Activated B cell treated with CpG ODN at 0.5 μM for 24 hours (primary cell): ENCODE measurements at regions of chr2 and their contacts with region 1.

Region 1: DNA sequence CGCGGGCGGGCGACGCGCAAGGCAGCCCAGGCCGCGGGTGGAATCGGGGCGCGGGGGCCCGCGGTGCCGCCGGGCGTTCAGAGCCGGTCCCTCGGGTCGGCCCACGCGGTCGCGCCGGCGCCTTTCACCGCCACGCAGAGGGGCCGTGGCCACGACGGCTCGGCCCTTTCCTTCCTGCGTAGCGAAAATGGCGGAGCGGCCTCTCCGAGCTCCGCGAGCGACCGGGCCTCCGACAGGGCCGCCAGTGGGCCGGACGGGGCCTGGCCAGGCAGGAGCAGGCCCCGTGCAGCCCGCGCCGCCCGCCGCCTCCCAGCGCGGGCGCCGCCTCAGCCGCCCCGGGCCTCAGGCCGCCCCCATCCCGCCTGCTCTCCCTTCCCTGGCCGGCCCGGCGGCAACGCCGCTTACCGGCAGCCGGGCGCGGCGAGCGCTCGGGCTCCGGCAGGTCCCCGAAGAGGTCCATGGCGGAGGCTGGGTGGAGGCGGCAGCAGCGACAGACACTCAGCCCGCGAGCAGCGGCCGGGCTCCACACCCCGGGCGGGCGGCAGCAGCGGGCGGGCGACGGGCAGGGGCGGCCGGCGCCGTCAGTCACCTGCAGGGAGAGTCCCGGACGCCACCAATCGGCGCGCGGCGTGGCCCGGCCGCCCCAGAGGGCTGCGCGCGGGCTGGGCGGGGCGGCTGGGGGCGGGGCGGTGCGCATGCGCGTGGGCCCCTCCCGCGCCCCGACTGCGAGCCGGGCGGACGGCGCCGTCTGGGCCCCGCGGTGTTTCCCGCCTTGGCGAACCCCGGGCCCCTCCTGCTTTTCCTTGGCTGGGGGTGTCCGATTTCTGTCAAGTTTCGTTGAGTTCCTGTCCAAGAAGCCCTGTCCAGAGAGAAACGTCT is at the start of gene ILKAP:
- DNase-seq: peak; percentile 90
- ATAC-seq: peak; percentile 97
- H3K4me3 Mint-ChIP-seq: peak within 1 kb of the TSS; percentile 85
- H3K27ac Mint-ChIP-seq: peak within 1 kb of the TSS; percentile 89
- H3K4me1 Mint-ChIP-seq: peaks cover 48% of the 10 kb centered on the region
- H3K27me3 Mint-ChIP-seq: no peaks in the 10 kb centered on the region
- CTCF ChIP-seq: no peak
- total RNA-seq, gene ILKAP: 64.4 and 77.3 TPM in 2 replicates

Region 2: DNA sequence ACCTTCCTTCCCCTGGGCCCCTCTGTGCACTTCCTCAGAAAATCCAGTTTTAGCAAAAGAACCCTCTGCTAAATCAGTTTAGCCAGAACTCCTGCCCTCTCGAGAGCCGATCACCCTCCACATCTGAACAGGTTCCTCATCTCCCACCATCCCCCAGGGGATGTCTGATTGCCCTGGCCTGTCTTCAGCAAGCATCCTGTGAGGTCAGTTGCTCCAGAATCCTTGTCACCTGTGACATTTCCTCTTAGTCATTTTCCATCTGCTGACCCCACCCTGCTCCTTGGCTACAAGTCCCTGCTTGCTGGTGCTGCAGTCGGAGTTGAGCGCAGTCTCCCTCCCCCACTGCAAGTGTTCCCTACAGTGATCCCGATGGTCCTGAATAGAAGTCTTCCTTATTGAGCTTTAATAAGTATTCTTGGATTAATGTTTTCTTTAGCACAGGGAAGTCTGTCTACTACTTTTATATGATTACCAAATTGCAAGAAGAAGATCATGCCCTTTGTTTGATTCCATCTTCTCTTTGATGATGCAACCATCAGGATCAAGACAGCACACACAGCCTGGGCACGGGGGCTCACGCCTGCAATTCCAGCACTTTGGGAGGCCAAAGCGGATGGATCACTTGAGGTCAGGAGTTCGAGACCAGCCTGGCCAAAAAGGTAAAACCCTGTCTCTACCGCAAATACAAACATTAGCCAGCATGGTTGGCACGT is 267.4 kb before region 1 on chr2:
- CTCF ChIA-PET with region 1: no interaction called
- POLR2A ChIA-PET with region 1: interaction called, 10 read pairs
- intact Hi-C with region 1: no loop called
- DNase-seq: no peak
- ATAC-seq: no peak
- H3K4me3 Mint-ChIP-seq: no peak overlapping the region
- H3K27ac Mint-ChIP-seq: no peak overlapping the region
- H3K4me1 Mint-ChIP-seq: peaks cover 6% of the 10 kb centered on the region
- H3K27me3 Mint-ChIP-seq: peaks cover 4% of the 10 kb centered on the region
- CTCF ChIP-seq: no peak

Region 3: DNA sequence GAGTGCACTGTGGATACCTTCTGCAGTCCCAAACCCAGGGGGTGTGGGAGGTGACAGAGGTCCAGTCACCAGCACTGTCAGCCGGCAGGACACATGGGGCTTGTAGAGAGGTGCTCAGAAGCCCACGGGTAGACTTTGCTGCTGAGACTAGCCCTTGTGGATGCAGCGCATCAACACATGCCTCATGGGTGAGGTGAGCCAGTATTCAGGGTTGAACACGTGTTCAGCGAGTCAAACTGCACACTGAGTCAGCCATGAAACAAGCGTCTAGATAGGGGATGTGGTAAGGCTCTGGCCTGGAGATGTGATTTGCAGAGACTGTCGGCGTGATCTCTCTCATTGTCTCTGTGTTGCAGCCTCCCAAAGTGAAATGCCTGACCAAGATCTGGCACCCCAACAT is 178.3 kb before region 1 on chr2:
- CTCF ChIA-PET with region 1: no interaction called
- POLR2A ChIA-PET with region 1: no interaction called
- intact Hi-C with region 1: no loop called
- DNase-seq: no peak
- ATAC-seq: no peak
- H3K4me3 Mint-ChIP-seq: no peak overlapping the region
- H3K27ac Mint-ChIP-seq: no peak overlapping the region
- H3K4me1 Mint-ChIP-seq: no peaks in the 10 kb centered on the region
- H3K27me3 Mint-ChIP-seq: no peaks in the 10 kb centered on the region
- CTCF ChIP-seq: no peak

Region 4: DNA sequence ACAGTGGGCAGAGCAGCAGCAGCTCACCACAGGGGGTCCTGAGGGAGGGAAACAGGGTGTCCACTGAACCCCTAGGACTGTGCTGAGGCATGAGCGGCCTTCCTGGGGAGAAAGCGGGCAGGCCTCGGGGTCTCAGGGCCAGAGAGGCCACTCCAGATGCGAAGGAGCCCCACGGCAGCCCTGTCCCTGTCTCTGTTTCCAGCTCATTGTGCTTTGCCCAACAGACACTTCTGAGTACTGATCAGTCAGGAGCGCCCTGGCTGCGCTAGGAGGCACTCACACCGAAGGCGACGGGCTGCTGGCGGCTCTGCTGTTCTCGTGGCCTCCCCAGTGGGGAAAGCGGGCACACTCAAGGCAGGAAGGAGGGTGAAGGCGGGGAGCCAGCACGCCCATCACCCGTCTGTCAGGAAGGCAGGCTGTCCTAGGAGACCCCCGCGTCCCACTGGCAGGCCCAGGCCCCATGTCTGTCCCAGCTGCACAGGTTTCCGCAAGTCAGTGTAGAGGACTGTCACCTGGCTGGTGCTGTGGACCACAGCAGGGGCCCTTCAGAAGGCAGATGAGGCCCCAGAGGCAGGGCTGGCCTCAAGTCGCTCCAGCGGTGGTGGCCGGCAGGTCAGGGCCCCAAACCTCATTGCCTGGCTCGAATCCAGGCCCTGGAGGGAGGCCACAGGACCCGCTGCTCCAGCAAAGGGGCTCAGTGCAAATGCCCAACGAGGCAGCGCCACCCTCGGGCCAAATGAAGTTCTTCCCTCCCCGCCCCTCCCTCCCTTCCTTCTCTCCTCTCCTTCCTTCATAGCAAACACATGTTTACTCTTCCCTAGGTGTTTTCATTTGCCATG is 96.4 kb before region 1 on chr2:
- CTCF ChIA-PET with region 1: no interaction called
- POLR2A ChIA-PET with region 1: interaction called, 6 read pairs
- intact Hi-C with region 1: loop called (anchors 1 kb)
- DNase-seq: peak; percentile 15
- ATAC-seq: no peak
- H3K4me3 Mint-ChIP-seq: peak overlapping the region; percentile 88
- H3K27ac Mint-ChIP-seq: peak overlapping the region; percentile 86
- H3K4me1 Mint-ChIP-seq: peaks cover 35% of the 10 kb centered on the region
- H3K27me3 Mint-ChIP-seq: no peaks in the 10 kb centered on the region
- CTCF ChIP-seq: no peak

Region 5: GRCh38 chr2:238231251-238231793 is 28.0 kb after region 1 on chr2:
- CTCF ChIA-PET with region 1: no interaction called
- POLR2A ChIA-PET with region 1: interaction called, 11 read pairs
- intact Hi-C with region 1: loop called (anchors 1 kb)
- DNase-seq: peak; percentile 76
- ATAC-seq: peak; percentile 84
- H3K4me3 Mint-ChIP-seq: peak overlapping the region; percentile 90
- H3K27ac Mint-ChIP-seq: no peak overlapping the region
- H3K4me1 Mint-ChIP-seq: peaks cover 16% of the 10 kb centered on the region
- H3K27me3 Mint-ChIP-seq: peaks cover 17% of the 10 kb centered on the region
- CTCF ChIP-seq: no peak

Region 6: GRCh38 chr2:238771218-238771617 is 567.9 kb after region 1 on chr2:
- CTCF ChIA-PET with region 1: no interaction called
- POLR2A ChIA-PET with region 1: no interaction called
- intact Hi-C with region 1: no loop called
- DNase-seq: no peak
- ATAC-seq: no peak
- H3K4me3 Mint-ChIP-seq: no peak overlapping the region
- H3K27ac Mint-ChIP-seq: no peak overlapping the region
- H3K4me1 Mint-ChIP-seq: peaks cover 12% of the 10 kb centered on the region
- H3K27me3 Mint-ChIP-seq: peaks cover 9% of the 10 kb centered on the region
- CTCF ChIP-seq: no peak